Panc1 (cell line): ENCODE measurements at regions of chr12 and their contacts with region 1.

Region 1: DNA sequence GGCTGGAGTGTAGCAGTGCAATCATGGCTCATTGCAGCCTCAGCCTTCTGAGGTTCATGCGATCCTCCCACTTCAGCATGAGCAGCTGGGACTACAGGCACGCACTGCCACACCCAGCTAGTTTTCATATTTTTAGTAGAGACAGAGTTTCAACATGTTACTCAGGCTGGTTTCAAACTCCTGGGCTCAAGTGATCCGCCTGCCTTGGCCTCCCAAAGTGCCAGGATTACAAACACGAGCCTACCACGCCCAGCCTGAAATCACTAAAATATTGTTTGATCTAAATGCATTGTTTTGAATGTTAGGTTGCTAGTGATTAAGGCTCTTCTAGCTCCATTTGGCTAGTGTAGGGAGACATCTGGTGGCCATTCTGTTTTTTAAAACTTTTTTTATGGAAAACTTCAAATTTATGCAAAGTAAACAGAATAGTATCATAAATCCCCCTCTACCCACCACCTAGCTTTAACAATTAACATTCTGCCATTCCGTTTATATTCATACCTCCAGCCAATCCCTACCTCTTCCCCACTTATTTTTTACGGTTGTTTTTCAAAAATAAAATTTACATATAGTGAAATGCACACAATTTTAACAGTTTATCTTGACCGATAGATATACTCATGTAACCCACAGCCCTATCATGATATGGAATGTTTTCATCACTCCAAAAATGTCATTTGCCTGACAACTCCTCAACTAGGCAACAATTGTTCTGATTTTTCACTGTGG is 37.8 kb downstream of the MYO1H start:
- DNase-seq: peak; percentile 27
- ATAC-seq: peak; percentile 74
- H3K4me3 ChIP-seq: no peak overlapping the region
- H3K27ac ChIP-seq: no peak overlapping the region
- H3K4me1 ChIP-seq: no peaks in the 10 kb centered on the region
- H3K27me3 ChIP-seq: peaks cover 11% of the 10 kb centered on the region; the same call in 1 of the 2 replicates
- CTCF ChIP-seq: peak; percentile 62

Region 2: GRCh38 chr12:109110988-109111495 is 274.5 kb before region 1 on chr12:
- CTCF ChIA-PET with region 1: interaction called, 9 read pairs
- POLR2A ChIA-PET with region 1: interaction called, 10 read pairs
- in situ Hi-C with region 1: no loop called
- intact Hi-C with region 1: loop called (anchors 5 kb)
- DNase-seq: no peak
- ATAC-seq: peak; percentile 98
- H3K4me3 ChIP-seq: peak overlapping the region; percentile 53 to 71
- H3K27ac ChIP-seq: peak overlapping the region; percentile 85
- H3K4me1 ChIP-seq: peaks cover 18% of the 10 kb centered on the region
- H3K27me3 ChIP-seq: no peaks in the 10 kb centered on the region
- CTCF ChIP-seq: no peak

Region 3: GRCh38 chr12:109264095-109264942 is 121.2 kb before region 1 on chr12:
- CTCF ChIA-PET with region 1: interaction called, 31 read pairs
- POLR2A ChIA-PET with region 1: interaction called, 4 read pairs
- in situ Hi-C with region 1: no loop called
- intact Hi-C with region 1: loop called (anchors 1 kb)
- DNase-seq: peak; percentile 28
- ATAC-seq: peak; percentile 97
- H3K4me3 ChIP-seq: peak overlapping the region in 1 of 2 experiments; percentile 13; a peak in 1 of 4 replicates
- H3K27ac ChIP-seq: no peak overlapping the region
- H3K4me1 ChIP-seq: 0 out of 2 replicates have a peak, but pooled peaks cover 6% of the 10 kb centered on the region
- H3K27me3 ChIP-seq: no peaks in the 10 kb centered on the region
- CTCF ChIP-seq: peak; percentile 96

Region 4: DNA sequence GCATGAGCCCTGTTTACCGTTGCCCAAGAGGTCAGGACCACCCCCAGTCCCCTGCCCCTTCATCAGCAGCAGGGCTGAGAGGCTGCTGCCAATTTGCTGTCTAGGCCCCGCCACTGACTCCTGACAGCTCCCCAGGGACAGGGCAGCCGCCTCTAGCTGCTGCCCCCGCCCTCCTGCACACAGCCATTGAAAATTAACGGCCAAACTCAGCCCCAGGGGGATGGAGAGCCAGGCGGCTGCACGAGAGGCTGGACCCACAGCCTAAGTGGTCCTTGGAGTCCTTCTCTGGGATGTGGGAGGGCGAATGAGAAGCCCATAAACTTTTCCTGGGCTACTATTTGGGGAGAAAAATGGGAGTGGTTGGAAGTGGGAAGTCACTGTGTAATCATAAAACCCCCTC is 81.0 kb before region 1 on chr12:
- CTCF ChIA-PET with region 1: interaction called, 11 read pairs
- POLR2A ChIA-PET with region 1: no interaction called
- in situ Hi-C with region 1: no loop called
- intact Hi-C with region 1: no loop called
- DNase-seq: no peak
- ATAC-seq: no peak
- H3K4me3 ChIP-seq: no peak overlapping the region
- H3K27ac ChIP-seq: no peak overlapping the region
- H3K4me1 ChIP-seq: 0 out of 2 replicates have a peak, but pooled peaks cover 3% of the 10 kb centered on the region
- H3K27me3 ChIP-seq: peaks cover 23% of the 10 kb centered on the region
- CTCF ChIP-seq: no peak